GM18951 (cell line): ENCODE measurements at regions of chr4 and their contacts with region 1.

Region 1: DNA sequence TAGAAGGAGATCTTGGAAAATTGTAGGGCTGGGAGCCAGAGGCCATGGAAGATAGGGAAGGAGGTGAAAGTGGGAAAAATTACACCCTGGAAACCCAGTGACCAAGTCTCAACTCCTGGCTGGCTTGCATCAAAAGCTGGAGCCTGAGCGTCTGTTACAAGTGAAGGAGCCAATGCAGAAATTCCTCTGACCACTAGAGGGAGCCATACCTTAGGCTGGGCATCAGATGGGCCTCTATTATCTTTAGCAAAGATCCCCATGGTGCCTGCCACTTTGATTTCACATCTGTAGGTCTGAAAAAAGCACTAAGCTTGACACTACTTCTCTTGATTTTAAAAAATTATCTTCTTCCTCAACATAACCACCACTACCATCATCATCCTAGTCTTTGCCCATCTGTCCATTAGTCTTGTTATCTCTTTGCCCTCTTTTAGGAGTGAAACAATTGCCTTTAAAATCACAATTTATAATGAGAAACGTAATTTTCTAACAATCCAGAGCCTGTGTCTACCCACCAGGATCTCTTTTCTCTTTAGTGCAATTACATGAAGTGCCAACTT is 62.9 kb downstream of the ANAPC4 start:
- POLR2A ChIP-seq: no peak

Region 2: GRCh38 chr4:25767877-25768725 is 328.1 kb after region 1 on chr4:
- in situ Hi-C with region 1: loop called (anchors 25 kb)
- POLR2A ChIP-seq: no peak